WTC11 (cell line): ENCODE measurements at regions of chr15 and their contacts with region 1.

Region 1: GRCh38 chr15:33700695-33701304 is 267.5 kb upstream of the CHRM5 start:
- DNase-seq: peak; percentile 87
- ATAC-seq: peak; percentile 90
- H3K4me3 Mint-ChIP-seq: no peak overlapping the region
- H3K27ac Mint-ChIP-seq: no peak overlapping the region
- H3K4me1 Mint-ChIP-seq: peaks cover 23% of the 10 kb centered on the region
- H3K27me3 Mint-ChIP-seq: no peaks in the 10 kb centered on the region
- CTCF ChIP-seq: peak; percentile 89

Region 2: DNA sequence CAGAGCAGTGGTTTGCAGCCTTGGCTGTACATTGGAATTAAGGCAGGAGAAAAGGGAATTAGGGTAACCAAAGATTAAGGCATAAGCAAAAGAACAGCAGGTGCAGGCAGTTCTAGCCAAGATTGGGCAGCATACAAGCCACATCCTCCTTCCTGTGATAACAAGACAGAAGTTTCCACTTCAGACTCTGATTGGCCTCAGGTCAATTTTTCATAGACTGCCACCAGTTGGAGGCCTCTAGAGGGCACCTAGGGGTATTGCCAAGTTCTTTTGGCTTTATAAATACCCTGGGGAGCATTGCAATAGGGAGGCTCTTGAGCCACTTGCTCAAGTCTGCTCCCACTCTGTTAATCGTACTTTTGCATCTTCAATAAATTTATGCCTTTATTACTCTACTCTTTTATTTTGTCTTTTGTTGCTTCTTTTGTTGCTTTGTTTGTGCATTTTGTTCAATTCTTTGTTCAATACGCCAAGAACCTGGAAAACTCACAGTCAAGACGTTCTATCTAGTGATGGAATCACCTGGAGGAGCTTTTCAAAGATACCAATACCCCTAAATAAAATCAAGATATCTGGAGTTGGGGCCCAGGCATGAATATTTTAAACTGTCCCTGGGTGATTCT is 474.1 kb before region 1 on chr15:
- CTCF ChIA-PET with region 1: interaction called, 11 read pairs
- POLR2A ChIA-PET with region 1: no interaction called
- DNase-seq: peak; percentile 25
- ATAC-seq: peak; percentile 90
- H3K4me3 Mint-ChIP-seq: no peak overlapping the region
- H3K27ac Mint-ChIP-seq: no peak overlapping the region
- H3K4me1 Mint-ChIP-seq: no peaks in the 10 kb centered on the region; the same call in 1 of the 2 replicates
- H3K27me3 Mint-ChIP-seq: no peaks in the 10 kb centered on the region
- CTCF ChIP-seq: 0 out of 2 replicates have a peak, but pooled peaks have one; percentile 13

Region 3: GRCh38 chr15:33284336-33284735 is 416.5 kb before region 1 on chr15:
- CTCF ChIA-PET with region 1: interaction called, 16 read pairs
- POLR2A ChIA-PET with region 1: no interaction called
- DNase-seq: no peak
- ATAC-seq: no peak
- H3K4me3 Mint-ChIP-seq: no peak overlapping the region
- H3K27ac Mint-ChIP-seq: no peak overlapping the region
- H3K4me1 Mint-ChIP-seq: peaks cover 9% of the 10 kb centered on the region
- H3K27me3 Mint-ChIP-seq: no peaks in the 10 kb centered on the region
- CTCF ChIP-seq: no peak

Region 4: DNA sequence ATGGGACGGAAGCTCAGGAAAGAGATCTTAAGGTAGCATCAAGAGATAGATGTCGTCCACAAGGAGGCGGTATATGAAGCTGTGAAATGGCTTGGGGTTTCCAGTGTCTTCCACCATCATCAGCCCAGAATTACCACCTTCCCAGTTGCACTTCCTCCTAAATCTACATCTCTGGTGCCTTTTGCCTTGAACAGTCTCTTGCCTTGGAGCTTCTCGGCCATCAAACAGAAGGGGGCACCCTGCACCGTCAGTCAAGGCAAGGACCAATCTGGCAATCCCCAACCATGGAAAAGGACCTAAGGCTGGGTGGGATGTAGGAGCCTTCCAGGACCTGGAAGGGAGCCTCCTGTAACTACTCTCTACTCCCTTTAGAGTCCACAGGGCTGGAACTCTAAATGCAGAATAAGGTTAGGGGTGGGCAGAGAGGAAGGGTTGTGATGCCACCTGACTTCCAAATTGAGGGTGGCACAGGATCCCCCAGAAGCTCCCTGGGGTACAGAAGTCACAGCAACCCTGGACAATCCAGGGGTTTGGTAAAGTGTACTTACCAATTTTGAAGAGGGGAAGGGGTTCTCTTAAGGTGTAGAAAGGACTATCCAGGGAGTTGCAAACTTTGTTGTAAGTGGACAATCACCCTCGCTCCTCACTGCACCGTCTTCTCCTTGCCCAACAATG is 391.1 kb before region 1 on chr15:
- CTCF ChIA-PET with region 1: interaction called, 94 read pairs
- POLR2A ChIA-PET with region 1: interaction called, 4 read pairs
- DNase-seq: peak; percentile 51
- ATAC-seq: peak; percentile 53
- H3K4me3 Mint-ChIP-seq: peak overlapping the region; percentile 82
- H3K27ac Mint-ChIP-seq: no peak overlapping the region
- H3K4me1 Mint-ChIP-seq: peaks cover 27% of the 10 kb centered on the region
- H3K27me3 Mint-ChIP-seq: peaks cover 54% of the 10 kb centered on the region
- CTCF ChIP-seq: no peak; the same call in 1 of the 2 replicates

Region 5: DNA sequence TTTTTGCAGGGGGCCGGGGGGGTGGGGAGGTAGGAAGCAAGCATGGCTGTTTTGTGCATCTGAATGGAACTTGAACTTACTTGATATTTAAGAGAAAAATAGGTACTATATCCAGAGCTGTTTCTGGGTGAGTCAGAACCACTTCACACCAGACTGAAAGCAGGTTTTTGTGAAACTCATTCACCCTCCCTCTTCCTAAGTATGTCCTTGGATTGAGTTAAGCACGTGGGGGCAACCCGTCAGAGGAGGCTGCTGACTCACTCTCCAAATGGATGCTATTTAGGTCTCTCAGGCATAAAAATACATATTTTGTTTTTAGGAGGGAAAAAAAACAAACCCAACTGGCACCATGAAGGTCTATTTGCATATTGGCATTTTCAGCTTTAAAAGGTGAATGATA is 119.8 kb before region 1 on chr15:
- CTCF ChIA-PET with region 1: interaction called, 12 read pairs
- POLR2A ChIA-PET with region 1: no interaction called
- DNase-seq: no peak
- ATAC-seq: peak; percentile 32; the same call in 1 of the 2 replicates
- H3K4me3 Mint-ChIP-seq: no peak overlapping the region
- H3K27ac Mint-ChIP-seq: no peak overlapping the region
- H3K4me1 Mint-ChIP-seq: peaks cover 40% of the 10 kb centered on the region
- H3K27me3 Mint-ChIP-seq: peaks cover 8% of the 10 kb centered on the region
- CTCF ChIP-seq: no peak

Region 6: DNA sequence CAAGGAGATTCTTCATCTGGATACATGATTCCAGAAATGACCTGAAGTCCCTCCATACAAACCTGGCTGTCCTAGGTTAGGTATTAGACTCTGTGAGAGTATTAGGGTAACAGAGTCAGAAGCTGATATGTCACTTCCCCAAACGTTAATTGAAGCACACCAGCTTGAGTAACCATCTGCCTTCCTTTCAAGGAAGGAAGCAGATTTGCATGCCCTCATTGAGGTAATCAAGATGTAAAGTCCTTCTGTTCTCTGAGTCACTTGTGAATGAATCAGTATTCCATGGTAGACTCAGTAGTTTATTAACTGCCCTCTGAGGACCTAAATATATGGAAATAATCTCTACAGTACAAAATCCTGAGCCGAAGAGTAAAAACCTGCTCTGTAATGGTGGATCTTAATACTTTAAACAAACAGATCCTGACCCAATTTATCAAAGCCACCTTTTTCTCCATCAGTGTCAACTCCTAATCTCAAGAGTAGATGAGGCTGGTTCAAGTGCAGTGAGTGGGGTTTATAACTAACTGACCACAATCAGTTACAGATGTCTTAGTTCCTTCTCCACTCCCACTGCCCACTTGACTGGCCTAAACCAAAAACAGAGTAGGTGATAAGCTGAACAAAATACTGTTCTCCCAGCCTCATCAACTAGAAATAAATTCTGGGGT is 21.3 kb after region 1 on chr15:
- CTCF ChIA-PET with region 1: interaction called, 12 read pairs
- POLR2A ChIA-PET with region 1: no interaction called
- DNase-seq: no peak
- ATAC-seq: no peak
- H3K4me3 Mint-ChIP-seq: no peak overlapping the region
- H3K27ac Mint-ChIP-seq: no peak overlapping the region
- H3K4me1 Mint-ChIP-seq: no peaks in the 10 kb centered on the region
- H3K27me3 Mint-ChIP-seq: no peaks in the 10 kb centered on the region
- CTCF ChIP-seq: no peak

Region 7: GRCh38 chr15:33860754-33861153 is 160.0 kb after region 1 on chr15:
- CTCF ChIA-PET with region 1: no interaction called
- POLR2A ChIA-PET with region 1: no interaction called
- DNase-seq: no peak
- ATAC-seq: peak; percentile 72
- H3K4me3 Mint-ChIP-seq: no peak overlapping the region
- H3K27ac Mint-ChIP-seq: no peak overlapping the region
- H3K4me1 Mint-ChIP-seq: peaks cover 17% of the 10 kb centered on the region
- H3K27me3 Mint-ChIP-seq: no peaks in the 10 kb centered on the region
- CTCF ChIP-seq: no peak